CD4-positive, alpha-beta T cell (primary cell): ENCODE measurements at regions of chr17 and their contacts with region 1.

Region 1: DNA sequence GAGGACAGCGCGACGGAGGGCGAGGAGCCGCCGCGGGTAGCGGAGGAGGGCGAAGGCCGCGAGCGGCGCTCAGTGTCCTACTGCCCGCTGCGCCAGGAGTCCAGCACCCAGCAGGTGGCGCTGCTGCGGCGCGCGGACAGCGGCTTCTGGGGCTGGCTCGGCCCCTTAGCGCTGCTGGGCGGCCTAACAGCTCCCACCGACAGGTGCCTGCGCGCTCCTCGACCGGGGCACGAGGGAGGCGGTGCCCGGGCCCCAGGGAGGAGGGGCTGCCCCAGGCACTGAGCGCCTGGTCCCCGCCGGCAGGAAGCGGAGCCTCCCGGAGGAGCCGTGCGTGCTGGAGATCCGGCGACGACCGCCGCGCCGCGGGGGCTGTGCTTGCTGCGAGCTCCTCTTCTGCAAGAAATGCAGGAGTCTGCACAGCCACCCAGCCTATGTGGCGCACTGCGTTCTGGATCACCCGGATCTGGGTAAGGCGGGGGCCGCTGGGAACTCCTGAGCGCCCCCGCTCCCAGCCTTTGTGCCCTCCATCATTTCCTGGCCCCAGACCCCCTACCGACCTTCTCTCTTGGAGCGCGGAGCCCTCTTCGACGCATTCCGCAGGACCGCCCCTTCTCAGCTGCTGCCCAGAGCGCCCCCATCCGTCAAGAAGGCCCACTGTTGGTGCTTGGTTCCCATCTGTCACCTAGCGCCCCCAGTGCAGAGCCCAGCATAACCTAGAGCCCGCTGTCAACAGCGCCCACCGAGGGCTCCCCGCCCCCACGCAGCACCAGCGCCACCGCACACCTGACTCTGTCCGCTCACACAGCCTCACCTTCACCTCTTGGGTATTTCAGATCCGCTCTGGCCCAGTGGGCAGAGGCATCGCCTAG is 3.7 kb downstream of the C17orf50 start:
- DNase-seq: peak; percentile 72 to 94 (median 84)
- ATAC-seq: peak; percentile 87
- H3K4me3 ChIP-seq: peak overlapping the region; percentile 79
- H3K4me3 Mint-ChIP-seq: peak overlapping the region; percentile 90
- H3K27ac ChIP-seq: peak overlapping the region; percentile 20 to 23
- H3K27ac Mint-ChIP-seq: peak overlapping the region; percentile 32
- H3K4me1 ChIP-seq: peaks cover 12% of the 10 kb centered on the region
- H3K4me1 Mint-ChIP-seq: peaks cover 7% of the 10 kb centered on the region
- H3K27me3 ChIP-seq: no peaks in the 10 kb centered on the region
- H3K27me3 Mint-ChIP-seq: no peaks in the 10 kb centered on the region
- CTCF ChIP-seq: peak; percentile 82

Region 2: GRCh38 chr17:35578197-35578928 is 186.0 kb before region 1 on chr17 and contains the start of gene PEX12:
- CTCF ChIA-PET with region 1: interaction called, 11 read pairs
- POLR2A ChIA-PET with region 1: interaction called, 11 read pairs
- intact Hi-C with region 1: no loop called
- DNase-seq: peak; percentile 77 to 96 (median 86)
- ATAC-seq: peak; percentile 96
- H3K4me3 ChIP-seq: peak within 1 kb of the TSS; percentile 85
- H3K4me3 Mint-ChIP-seq: peak within 1 kb of the TSS; percentile 92
- H3K27ac ChIP-seq: peak within 1 kb of the TSS; percentile 90 to 93
- H3K27ac Mint-ChIP-seq: peak within 1 kb of the TSS; percentile 97
- H3K4me1 ChIP-seq: peaks cover 21% of the 10 kb centered on the region
- H3K4me1 Mint-ChIP-seq: peaks cover 42% of the 10 kb centered on the region
- H3K27me3 ChIP-seq: no peaks in the 10 kb centered on the region
- H3K27me3 Mint-ChIP-seq: no peaks in the 10 kb centered on the region
- CTCF ChIP-seq: no peak
- total RNA-seq, gene PEX12: 3.0 to 3.2 TPM

Region 3: DNA sequence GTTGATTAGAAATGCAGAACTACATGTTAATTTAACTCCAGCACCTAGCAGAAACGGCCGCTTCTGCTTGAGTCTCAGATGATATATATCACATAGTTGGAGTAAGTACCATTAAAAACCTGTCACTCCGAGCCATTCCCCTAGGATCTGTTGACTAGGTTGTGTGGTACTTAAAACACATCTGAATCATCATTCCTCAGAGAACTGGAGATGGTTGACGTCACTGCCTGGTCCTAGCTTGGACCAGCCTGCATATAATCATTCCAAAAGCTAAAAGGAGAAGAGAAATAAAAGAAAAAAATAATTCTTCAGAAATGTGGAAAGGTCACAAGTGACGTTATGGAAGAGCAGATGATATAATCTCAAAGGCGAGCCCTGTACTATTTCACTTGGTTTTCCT is 64.2 kb before region 1 on chr17:
- CTCF ChIA-PET with region 1: no interaction called
- POLR2A ChIA-PET with region 1: no interaction called
- intact Hi-C with region 1: no loop called
- DNase-seq: no peak
- ATAC-seq: no peak
- H3K4me3 ChIP-seq: no peak overlapping the region
- H3K4me3 Mint-ChIP-seq: no peak overlapping the region
- H3K27ac ChIP-seq: no peak overlapping the region
- H3K27ac Mint-ChIP-seq: no peak overlapping the region
- H3K4me1 ChIP-seq: no peaks in the 10 kb centered on the region
- H3K4me1 Mint-ChIP-seq: peaks cover 22% of the 10 kb centered on the region
- H3K27me3 ChIP-seq: no peaks in the 10 kb centered on the region
- H3K27me3 Mint-ChIP-seq: no peaks in the 10 kb centered on the region
- CTCF ChIP-seq: no peak

Region 4: DNA sequence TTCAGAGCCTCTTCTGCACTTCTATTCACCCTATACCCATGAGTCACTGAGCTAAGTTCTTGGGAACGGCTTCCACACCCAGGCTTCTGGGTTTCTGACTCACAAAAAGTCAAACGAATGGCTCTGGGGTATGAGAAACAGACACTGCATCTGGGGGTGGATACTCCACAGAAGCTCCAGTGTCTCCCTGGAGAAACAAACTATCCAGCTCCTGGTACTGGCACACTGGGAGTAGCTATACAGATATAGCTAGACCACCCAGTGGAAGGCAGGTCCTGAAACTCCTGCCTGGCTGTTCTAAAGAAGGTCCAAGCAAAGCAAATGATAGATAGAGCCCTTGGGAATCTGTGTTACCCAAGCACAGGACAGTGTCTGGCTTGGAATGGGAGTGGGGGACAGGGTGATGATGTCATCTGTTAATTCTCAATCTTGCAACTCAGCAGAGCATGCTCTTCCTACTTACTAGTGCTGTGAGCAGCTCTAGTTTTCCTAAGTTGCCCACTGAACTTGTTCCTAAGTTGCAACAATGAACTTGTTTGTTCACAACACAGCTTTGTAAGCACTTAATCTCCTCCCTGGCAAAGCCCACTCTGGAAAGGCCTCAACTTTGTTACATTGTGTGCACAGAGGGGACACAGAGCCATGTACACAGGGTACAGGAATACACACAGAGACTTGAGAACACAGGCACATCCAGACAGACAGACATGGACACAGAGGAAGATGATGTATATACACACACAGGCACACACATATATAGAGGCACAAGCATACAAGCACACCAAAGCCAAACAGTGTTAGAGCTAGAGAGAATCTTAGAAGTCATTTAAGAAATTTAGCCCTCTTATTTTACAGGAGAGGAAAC is 24.4 kb after region 1 on chr17:
- CTCF ChIA-PET with region 1: interaction called, 12 read pairs
- POLR2A ChIA-PET with region 1: interaction called, 4 read pairs
- intact Hi-C with region 1: no loop called
- DNase-seq: no peak
- ATAC-seq: no peak
- H3K4me3 ChIP-seq: no peak overlapping the region
- H3K4me3 Mint-ChIP-seq: peak overlapping the region; percentile 0
- H3K27ac ChIP-seq: no peak overlapping the region
- H3K27ac Mint-ChIP-seq: peak overlapping the region; percentile 61
- H3K4me1 ChIP-seq: peaks cover 4% of the 10 kb centered on the region
- H3K4me1 Mint-ChIP-seq: peaks cover 41% of the 10 kb centered on the region
- H3K27me3 ChIP-seq: peaks cover 0 to 9% of the 10 kb centered on the region in 2 experiments
- H3K27me3 Mint-ChIP-seq: peaks cover 17% of the 10 kb centered on the region
- CTCF ChIP-seq: no peak

Region 5: DNA sequence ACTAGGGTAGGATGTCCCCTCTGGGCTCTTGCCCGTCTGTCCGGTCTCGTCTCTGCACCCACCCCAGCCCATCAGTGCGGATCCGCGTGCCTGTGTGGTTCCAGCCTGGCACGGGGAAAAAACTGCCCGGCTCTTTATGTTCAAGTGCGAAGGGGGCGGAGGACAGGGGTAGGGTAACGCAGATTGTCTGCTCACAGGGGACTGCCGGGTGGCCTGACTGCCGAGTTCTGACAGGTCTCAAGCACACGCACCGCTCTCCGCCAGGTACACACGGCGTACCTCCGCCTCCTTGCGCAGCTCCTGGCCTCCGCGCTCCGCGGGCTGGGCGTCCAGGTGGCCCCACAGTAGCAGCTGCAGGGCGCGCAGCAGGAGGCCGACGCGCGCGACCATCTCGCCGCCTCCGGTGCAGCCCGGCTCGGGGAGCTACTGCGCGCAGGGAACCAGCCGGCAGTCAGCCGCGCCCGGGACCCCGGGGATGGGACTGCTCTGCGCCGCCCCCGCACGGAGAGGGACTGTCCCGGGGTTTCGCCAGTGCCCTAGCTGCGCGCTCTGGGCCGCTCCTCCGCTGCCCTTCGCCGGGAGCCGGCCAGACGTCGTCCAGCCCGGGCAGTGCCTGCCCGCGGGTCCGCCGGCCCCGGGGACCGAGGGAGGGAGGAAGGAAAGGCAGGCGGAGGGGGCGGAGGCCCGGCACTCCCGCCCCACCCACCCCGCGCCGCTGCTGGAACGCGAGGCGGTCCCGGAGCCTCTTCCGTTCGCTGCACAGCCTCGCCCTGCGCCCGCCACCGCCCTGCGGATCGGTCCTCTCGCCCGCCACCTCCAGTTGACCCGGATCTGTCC is 30.8 kb after region 1 on chr17 and contains the start of gene MMP28:
- CTCF ChIA-PET with region 1: interaction called, 15 read pairs
- POLR2A ChIA-PET with region 1: interaction called, 13 read pairs
- intact Hi-C with region 1: no loop called
- DNase-seq: peak in 8 of 14 experiments; percentile 20 to 63 (median 41)
- ATAC-seq: peak; percentile 83
- H3K4me3 ChIP-seq: peak within 1 kb of the TSS; percentile 53
- H3K4me3 Mint-ChIP-seq: peak within 1 kb of the TSS; percentile 86
- H3K27ac ChIP-seq: no peak within 1 kb of the TSS
- H3K27ac Mint-ChIP-seq: no peak within 1 kb of the TSS
- H3K4me1 ChIP-seq: peaks cover 18% of the 10 kb centered on the region
- H3K4me1 Mint-ChIP-seq: peaks cover 40% of the 10 kb centered on the region
- H3K27me3 ChIP-seq: peaks cover 15 to 22% of the 10 kb centered on the region in 2 experiments
- H3K27me3 Mint-ChIP-seq: peaks cover 30% of the 10 kb centered on the region
- CTCF ChIP-seq: no peak
- total RNA-seq, gene MMP28: 6.7 to 9.9 TPM

Region 6: GRCh38 chr17:35819456-35819855 is 55.1 kb after region 1 on chr17:
- CTCF ChIA-PET with region 1: interaction called, 156 read pairs
- POLR2A ChIA-PET with region 1: interaction called, 3 read pairs
- intact Hi-C with region 1: no loop called
- DNase-seq: no peak
- ATAC-seq: no peak
- H3K4me3 ChIP-seq: no peak overlapping the region
- H3K4me3 Mint-ChIP-seq: no peak overlapping the region
- H3K27ac ChIP-seq: no peak overlapping the region
- H3K27ac Mint-ChIP-seq: peak overlapping the region; percentile 52
- H3K4me1 ChIP-seq: peaks cover 13% of the 10 kb centered on the region
- H3K4me1 Mint-ChIP-seq: peaks cover 44% of the 10 kb centered on the region
- H3K27me3 ChIP-seq: no peaks in the 10 kb centered on the region
- H3K27me3 Mint-ChIP-seq: no peaks in the 10 kb centered on the region
- CTCF ChIP-seq: no peak

Region 7: DNA sequence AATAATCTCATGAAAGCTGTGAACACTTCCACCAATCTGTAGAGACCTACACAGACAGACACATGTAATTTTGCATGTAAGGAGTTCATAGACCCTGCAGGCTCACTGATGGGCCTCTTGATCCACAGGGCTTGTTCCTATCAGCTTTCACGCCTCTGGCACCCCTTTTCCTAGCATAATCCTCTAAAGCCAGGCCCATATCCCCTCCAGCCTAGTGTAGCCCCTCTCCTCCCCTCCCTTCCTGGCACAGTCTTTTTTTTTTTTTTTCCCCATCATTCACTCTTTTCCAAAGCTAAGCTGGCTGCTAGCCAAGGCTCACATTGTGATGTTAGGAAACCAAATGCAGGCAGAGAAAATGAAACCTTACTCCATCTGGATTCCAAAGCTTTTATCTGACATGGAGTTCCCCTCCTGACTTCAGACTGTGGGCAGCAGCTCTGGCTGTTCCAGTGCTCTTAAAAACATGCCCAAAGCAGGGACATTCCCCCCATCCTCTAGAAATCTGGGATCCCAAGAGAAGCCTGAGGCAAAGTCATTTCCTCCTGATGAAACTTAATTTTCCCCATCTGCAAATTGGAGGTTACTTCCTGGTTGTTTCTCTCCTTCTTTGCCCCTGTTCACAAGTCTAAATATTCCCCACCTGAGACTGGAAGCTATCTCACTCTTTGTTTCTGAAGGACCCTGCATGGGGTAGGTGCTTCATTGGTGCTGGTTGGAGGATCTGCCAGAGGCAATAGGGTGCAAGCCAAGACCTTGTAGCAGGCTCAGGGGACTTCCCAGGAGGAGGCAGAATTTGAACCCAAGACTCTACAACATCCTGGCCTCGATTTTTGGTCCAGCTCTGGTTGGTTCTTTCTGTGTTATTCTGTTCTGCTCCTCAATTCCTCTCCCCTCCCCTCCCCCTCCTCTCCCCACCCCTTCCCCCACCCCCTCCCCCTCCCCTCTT is 125.7 kb after region 1 on chr17:
- CTCF ChIA-PET with region 1: no interaction called
- POLR2A ChIA-PET with region 1: no interaction called
- intact Hi-C with region 1: no loop called
- DNase-seq: peak in 2 of 14 experiments; percentile 38 to 42
- ATAC-seq: no peak
- H3K4me3 ChIP-seq: no peak overlapping the region
- H3K4me3 Mint-ChIP-seq: no peak overlapping the region
- H3K27ac ChIP-seq: no peak overlapping the region
- H3K27ac Mint-ChIP-seq: peak overlapping the region; percentile 76
- H3K4me1 ChIP-seq: peaks cover 63% of the 10 kb centered on the region
- H3K4me1 Mint-ChIP-seq: peaks cover 21% of the 10 kb centered on the region
- H3K27me3 ChIP-seq: no peaks in the 10 kb centered on the region
- H3K27me3 Mint-ChIP-seq: no peaks in the 10 kb centered on the region
- CTCF ChIP-seq: no peak

Region 8: DNA sequence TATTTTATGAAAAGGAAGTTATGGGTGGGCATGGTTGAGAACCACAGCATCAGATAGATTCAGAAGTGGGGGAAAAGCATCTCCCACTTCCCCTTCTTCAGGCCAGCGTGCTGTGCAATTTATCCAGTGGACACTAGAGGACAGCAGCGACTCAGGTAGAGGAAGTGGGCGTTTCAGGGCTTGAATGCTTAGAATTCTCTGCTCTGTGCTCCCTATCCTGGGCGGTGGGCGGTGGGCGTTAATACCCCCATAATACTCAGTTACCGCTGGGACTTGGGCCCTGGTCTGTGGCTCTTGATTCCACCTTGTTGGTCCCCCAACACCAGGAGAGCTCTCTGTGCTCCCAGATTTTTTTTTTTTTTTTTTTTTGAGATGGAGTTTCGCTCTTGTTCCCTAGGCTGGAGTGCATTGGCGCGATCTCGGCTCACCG is 182.8 kb after region 1 on chr17:
- CTCF ChIA-PET with region 1: no interaction called
- POLR2A ChIA-PET with region 1: no interaction called
- intact Hi-C with region 1: no loop called
- DNase-seq: peak in 13 of 14 experiments; percentile 9 to 71 (median 26)
- ATAC-seq: peak; percentile 85
- H3K4me3 ChIP-seq: no peak overlapping the region
- H3K4me3 Mint-ChIP-seq: no peak overlapping the region
- H3K27ac ChIP-seq: no peak overlapping the region
- H3K27ac Mint-ChIP-seq: no peak overlapping the region
- H3K4me1 ChIP-seq: peaks cover 6% of the 10 kb centered on the region
- H3K4me1 Mint-ChIP-seq: no peaks in the 10 kb centered on the region
- H3K27me3 ChIP-seq: no peaks in the 10 kb centered on the region
- H3K27me3 Mint-ChIP-seq: no peaks in the 10 kb centered on the region
- CTCF ChIP-seq: peak; percentile 68

Region 9: DNA sequence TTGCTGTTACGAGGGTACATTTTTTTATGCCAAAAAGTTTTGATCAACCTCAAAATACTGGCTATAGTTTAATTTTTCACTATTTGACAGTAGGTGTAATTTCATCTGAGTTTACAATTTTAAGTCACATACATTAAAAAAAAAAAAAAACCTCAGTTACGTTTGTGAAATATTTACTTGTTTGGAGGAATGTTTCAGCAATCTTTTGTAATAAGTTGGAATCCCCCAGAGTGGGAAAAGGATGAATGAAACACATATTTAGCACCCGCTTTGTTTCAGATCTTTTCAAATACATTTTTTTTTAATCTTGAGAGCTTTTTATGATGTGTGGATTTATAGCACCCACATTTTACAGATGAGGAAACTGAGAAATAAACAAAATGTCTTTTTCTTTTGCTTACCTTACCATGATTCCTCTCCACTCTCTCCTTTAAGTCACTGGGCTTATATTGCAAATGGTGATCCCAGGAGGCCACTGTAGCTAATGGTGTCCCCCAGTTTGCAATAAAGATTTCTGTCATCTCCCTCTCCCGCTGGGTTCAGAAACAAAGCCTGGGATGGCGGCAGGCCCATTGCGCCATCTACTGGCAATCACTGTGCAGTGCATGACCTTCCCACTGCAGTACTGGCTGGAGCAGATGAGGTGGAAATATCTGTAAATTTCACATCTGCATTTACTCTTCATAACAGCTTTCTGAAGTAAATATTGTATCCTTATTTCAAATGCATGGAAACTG is 384.4 kb after region 1 on chr17:
- CTCF ChIA-PET with region 1: interaction called, 3 read pairs
- POLR2A ChIA-PET with region 1: no interaction called
- intact Hi-C with region 1: loop called in 1 of 2 experiments (anchors 10 kb)
- DNase-seq: peak; percentile 24 to 79 (median 49)
- ATAC-seq: peak; percentile 71
- H3K4me3 ChIP-seq: no peak overlapping the region
- H3K4me3 Mint-ChIP-seq: no peak overlapping the region
- H3K27ac ChIP-seq: no peak overlapping the region
- H3K27ac Mint-ChIP-seq: no peak overlapping the region
- H3K4me1 ChIP-seq: peaks cover 4% of the 10 kb centered on the region
- H3K4me1 Mint-ChIP-seq: no peaks in the 10 kb centered on the region
- H3K27me3 ChIP-seq: peaks cover 13% of the 10 kb centered on the region in 2 experiments
- H3K27me3 Mint-ChIP-seq: peaks cover 33% of the 10 kb centered on the region
- CTCF ChIP-seq: peak; percentile 96